Left lung (tissue), 14 donors: ENCODE measurements at regions of chr1 and their contacts with region 1.

Region 1: GRCh38 chr1:23184212-23184934 is 15.7 kb upstream of the LUZP1 start:
- DNase-seq: peak in 1 of 4 donors; percentile 58
- ATAC-seq: peak; percentile 72
- H3K4me3 ChIP-seq: no peak overlapping the region
- H3K27ac ChIP-seq: no peak overlapping the region
- H3K4me1 ChIP-seq: peaks cover 0 to 7% of the 10 kb centered on the region in 2 donors
- H3K27me3 ChIP-seq: no peaks in the 10 kb centered on the region
- CTCF ChIP-seq: peak; percentile 60 to 88

Region 2: DNA sequence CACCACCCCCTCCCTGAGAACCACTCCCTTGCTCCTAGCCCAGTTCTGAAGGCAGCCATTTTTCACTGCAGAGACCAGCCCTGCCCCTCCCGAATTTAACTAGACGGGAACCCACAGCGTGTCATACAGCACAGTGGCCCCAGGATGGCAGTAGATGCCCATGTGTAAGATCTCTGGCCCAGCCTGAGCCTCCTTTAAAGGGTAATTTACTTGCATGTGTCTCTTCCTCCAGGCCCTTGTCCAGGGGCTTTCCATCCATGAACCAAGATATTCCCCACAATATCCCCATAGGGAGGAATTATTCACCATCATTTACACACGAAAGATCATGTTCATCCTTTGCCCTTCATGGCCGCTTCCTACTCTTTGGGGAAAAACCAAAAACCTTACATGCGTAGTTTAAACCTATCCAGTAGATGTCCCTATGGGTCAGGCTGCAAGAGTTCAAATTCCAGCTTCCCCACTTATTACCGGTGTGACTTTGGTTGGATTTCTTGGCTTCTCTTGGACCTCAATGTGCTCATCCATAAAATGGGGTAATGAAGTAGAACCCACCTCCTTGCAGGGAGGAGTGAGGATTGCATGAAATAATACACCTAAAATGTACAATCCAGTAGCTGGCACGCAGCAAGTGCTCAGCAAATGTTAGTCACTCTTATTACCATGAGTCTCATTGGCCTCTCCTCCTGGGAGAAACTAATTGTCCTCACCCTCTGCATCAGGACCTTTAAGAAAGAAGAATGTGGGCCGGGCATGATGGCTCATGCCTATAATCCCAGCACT is 207.7 kb before region 1 on chr1:
- intact Hi-C with region 1: loop called in 1 of 2 experiments (anchors 10 kb)
- DNase-seq: peak in 3 of 4 donors; percentile 36 to 68 (median 58)
- ATAC-seq: peak; percentile 99
- H3K4me3 ChIP-seq: no peak overlapping the region
- H3K27ac ChIP-seq: no peak overlapping the region
- H3K4me1 ChIP-seq: no peaks in the 10 kb centered on the region
- H3K27me3 ChIP-seq: peaks cover 0 to 48% of the 10 kb centered on the region in 2 donors
- CTCF ChIP-seq: peak; percentile 48 to 53

Region 3: DNA sequence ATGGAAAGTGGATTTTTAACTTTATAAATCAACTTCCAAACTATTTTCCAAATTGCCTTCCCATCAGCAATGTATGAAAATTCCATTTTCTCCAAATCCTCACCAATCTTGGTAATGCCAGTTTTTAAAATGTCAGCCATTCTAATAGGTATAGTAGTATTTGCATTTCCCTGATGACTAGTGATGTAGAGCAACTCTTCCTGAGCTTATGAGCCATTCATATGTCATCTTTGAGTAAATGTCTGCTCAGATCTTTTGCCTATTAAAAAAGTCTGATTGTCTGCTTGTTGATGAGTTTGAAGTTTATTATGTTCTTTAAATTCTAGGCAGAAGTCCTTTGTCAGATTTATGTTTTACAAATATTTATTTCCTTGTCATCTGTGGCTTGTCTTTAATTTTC is 110.4 kb before region 1 on chr1:
- intact Hi-C with region 1: no loop called
- DNase-seq: no peak
- ATAC-seq: no peak
- H3K4me3 ChIP-seq: no peak overlapping the region
- H3K27ac ChIP-seq: no peak overlapping the region
- H3K4me1 ChIP-seq: no peaks in the 10 kb centered on the region
- H3K27me3 ChIP-seq: no peaks in the 10 kb centered on the region
- CTCF ChIP-seq: no peak

Region 4: DNA sequence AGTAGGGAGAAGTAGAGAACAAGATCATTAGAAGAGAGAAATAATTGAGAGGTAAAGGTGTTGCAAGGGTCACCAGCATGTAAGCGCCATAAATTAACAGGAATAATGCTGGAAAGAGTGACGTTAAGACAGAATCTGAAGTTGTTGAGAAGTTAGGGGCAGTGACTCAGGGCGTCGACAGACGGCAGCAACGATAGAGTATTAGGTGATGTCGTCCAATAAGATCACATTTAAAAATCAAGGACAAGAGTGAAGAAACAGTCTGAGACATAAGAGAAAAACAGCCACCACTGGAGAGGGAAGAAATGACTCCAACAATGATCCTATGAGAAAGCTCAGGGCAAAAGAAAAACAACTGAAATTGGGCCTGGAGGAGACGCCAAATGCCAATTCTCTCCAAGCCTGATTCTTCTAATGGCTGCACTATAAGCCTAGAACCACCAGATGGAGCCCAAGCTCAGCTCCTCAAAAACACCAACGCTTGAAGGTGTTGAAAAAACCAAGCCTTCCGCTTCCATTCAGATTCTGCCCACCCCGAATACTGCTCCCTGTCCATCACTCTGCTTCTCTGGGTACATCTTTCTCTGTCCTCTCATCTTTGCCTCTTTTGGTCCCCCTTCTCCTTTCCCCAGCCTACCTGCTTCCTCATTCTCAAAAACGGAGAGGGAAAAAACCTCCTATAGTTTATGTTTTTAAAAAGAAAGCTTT is 85.8 kb before region 1 on chr1:
- intact Hi-C with region 1: loop called in 1 of 2 experiments (anchors 2 kb)
- DNase-seq: peak in 2 of 4 donors; percentile 70 to 79
- ATAC-seq: peak; percentile 88
- H3K4me3 ChIP-seq: no peak overlapping the region
- H3K27ac ChIP-seq: no peak overlapping the region
- H3K4me1 ChIP-seq: peaks cover 33 to 55% of the 10 kb centered on the region in 2 donors
- H3K27me3 ChIP-seq: no peaks in the 10 kb centered on the region
- CTCF ChIP-seq: peak; percentile 82 to 86